Activated CD8-positive, alpha-beta T cell treated with anti-CD3 and anti-CD28 coated beads, Interleukin-2, amount 10 ng/mL, durations not matched to agents 7 days and 5 days (primary cell): ENCODE measurements at regions of chr22 and their contacts with region 1.

Region 1: GRCh38 chr22:50507991-50508884 is at the start of gene NCAPH2:
- DNase-seq: peak; percentile 98
- ATAC-seq: peak; percentile 76
- H3K4me3 Mint-ChIP-seq: peak within 1 kb of the TSS; percentile 98
- H3K27ac Mint-ChIP-seq: peak within 1 kb of the TSS; percentile 94
- H3K4me1 Mint-ChIP-seq: peaks cover 25% of the 10 kb centered on the region
- H3K27me3 Mint-ChIP-seq: no peaks in the 10 kb centered on the region
- total RNA-seq, gene NCAPH2: 146 to 150 TPM

Region 2: DNA sequence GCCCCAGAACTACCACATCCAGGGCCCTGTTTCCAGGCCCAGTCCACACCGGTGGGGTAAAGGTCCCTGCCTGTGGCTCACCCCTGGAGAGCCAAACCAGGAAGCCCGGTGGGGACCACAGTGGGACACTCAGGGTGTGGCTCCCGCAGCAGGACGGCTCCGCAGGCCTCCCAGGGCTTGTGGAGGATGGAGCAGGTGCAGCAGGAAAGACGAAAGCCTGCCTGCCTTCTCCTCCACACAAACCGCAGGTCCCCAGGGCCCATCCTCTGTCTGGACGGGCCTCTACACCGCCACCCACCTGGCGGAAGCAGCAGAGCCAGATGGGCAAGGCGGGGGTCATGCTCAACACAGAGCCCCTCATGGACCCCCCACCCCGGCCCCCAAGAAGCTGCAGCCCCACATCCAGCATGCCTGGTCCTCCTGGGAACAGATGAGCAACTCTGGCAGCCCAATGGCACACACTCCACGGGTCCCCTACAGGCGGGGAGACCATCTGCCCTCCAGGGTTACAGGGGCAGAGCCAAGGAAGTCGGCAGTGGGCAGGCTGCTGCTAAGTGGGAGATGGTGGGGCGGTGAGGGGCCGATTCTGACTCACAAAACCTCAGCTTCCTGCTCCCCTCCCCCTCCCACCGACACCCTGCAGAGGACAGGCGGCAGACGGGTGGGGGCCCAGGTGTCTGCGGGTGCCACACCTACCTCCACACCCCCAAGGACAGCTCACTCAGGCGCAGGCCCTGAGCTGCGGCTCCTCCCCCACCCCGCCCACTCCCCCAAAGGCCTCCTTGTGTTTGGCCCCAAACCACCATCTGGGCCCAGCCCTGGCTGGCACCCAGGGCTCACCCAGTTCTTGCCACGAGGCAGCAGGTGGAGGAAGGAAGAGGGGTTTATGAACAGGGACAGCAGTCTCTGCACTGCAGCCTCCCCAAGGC is 38.6 kb before region 1 on chr22:
- CTCF ChIA-PET with region 1: interaction called, 10 read pairs
- POLR2A ChIA-PET with region 1: interaction called, 20 read pairs
- DNase-seq: peak; percentile 99
- ATAC-seq: peak; percentile 75
- H3K4me3 Mint-ChIP-seq: peak overlapping the region; percentile 71
- H3K27ac Mint-ChIP-seq: peak overlapping the region; percentile 95
- H3K4me1 Mint-ChIP-seq: peaks cover 76% of the 10 kb centered on the region
- H3K27me3 Mint-ChIP-seq: no peaks in the 10 kb centered on the region

Region 3: GRCh38 chr22:50537765-50538164 is 29.5 kb after region 1 on chr22:
- CTCF ChIA-PET with region 1: no interaction called
- POLR2A ChIA-PET with region 1: interaction called, 26 read pairs
- DNase-seq: no peak
- ATAC-seq: no peak
- H3K4me3 Mint-ChIP-seq: no peak overlapping the region
- H3K27ac Mint-ChIP-seq: peak overlapping the region; percentile 100
- H3K4me1 Mint-ChIP-seq: peaks cover 73% of the 10 kb centered on the region
- H3K27me3 Mint-ChIP-seq: no peaks in the 10 kb centered on the region